ENCODE measurements at regions of chr6 and their contacts with region 1.

Region 1: GRCh38 chr6:131615275-131615674 is 12.8 kb downstream of the MED23 start:
- DNase-seq: no peak
- ATAC-seq: no peak
- H3K4me3 ChIP-seq: no peak overlapping the region
- H3K27ac ChIP-seq: no peak overlapping the region
- H3K4me1 ChIP-seq: no peaks in the 10 kb centered on the region
- H3K27me3 ChIP-seq: no peaks in the 10 kb centered on the region
- CTCF ChIP-seq: no peak

Region 2: DNA sequence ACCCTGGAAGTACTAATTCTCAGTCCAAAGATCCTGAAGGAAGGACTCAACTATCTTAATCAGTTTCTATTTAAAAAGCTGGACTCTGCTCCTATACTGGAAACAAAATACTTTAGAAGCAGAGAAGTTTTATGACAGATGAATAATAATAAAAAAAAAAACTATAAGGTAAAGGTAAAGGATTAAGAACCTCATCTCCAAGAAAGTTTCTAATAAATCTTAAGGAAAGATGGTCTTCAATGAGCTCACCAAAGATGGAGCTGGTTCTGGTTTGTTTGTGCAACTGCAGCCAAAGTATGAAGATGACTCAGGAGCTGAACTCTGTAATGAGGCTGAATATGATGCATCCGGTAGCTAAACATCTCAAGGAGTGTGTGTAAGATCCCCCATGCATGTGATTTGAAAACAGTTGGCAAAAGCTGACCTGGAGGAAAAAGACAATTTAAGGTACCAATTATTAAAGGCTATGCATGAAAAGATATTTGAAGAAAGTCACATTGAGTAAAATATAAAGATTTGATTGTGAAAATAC is 12.4 kb before region 1 on chr6:
- intact Hi-C with region 1: loop called in 1 of 2 experiments (anchors 2 kb)
- DNase-seq: no peak
- ATAC-seq: no peak
- H3K4me3 ChIP-seq: no peak overlapping the region
- H3K27ac ChIP-seq: no peak overlapping the region
- H3K4me1 ChIP-seq: no peaks in the 10 kb centered on the region
- H3K27me3 ChIP-seq: no peaks in the 10 kb centered on the region
- CTCF ChIP-seq: no peak

Region 3: DNA sequence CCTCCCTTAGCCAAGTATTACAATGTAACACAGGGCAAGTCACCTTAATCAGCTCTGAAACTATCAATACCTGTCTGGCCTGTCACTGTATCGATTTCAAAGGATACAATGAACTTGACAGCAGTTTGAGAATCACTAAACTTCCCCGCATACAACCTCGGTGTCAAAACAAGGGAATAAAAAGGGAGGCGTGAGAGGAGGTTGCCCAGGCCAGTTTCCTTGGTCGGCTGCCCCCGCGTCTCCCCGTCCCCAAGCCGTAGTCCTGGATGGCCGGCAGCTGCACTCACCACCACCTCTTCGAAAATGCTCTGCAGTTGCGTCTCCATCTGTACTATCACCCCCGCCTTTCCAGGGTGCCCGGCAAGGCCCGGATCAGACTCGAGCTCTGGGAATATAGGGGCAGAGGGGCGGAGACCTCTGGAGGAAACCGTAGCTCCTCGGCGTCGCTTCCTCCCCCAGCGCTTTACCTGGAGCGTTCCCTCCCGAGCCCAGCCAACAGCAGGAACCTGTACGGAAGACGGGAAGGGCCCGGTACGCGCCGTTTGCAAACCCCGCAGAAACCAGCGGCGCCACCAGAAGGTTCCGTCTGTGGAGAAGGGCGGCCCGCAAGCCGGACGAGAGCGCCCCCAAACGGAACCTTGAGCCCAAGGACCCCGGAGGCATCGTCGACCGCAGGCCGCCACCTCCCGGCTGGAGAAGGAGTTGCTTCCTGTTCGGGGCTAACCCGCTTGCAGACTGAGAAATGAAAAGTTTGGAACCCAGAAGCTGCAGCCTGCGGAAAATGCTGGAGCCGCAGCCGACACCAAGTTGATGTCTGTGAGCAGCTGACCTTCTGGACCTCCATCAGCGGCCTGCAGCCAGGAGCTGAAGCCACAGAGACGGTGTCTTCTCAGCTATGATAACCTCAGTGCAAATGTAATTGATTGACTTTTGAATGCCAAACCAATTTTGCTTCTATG is 12.7 kb after region 1 on chr6 and contains the start of gene MED23:
- intact Hi-C with region 1: no loop called
- DNase-seq: peak; percentile 94 to 96
- ATAC-seq: peak; percentile 98 to 100 (median 99)
- H3K4me3 ChIP-seq: peak within 1 kb of the TSS; percentile 78
- H3K27ac ChIP-seq: peak within 1 kb of the TSS; percentile 78
- H3K4me1 ChIP-seq: peaks cover 6% of the 10 kb centered on the region
- H3K27me3 ChIP-seq: no peaks in the 10 kb centered on the region
- CTCF ChIP-seq: peak; percentile 92
- total RNA-seq, gene MED23: 7.9 to 11.2 (median 9.1) TPM

Region 4: GRCh38 chr6:131733376-131734016 is 118.2 kb after region 1 on chr6:
- intact Hi-C with region 1: no loop called
- DNase-seq: no peak
- ATAC-seq: no peak
- H3K4me3 ChIP-seq: no peak overlapping the region
- H3K27ac ChIP-seq: no peak overlapping the region
- H3K4me1 ChIP-seq: no peaks in the 10 kb centered on the region
- H3K27me3 ChIP-seq: no peaks in the 10 kb centered on the region
- CTCF ChIP-seq: no peak